ENCODE measurements at regions of chr3 and their contacts with region 1.

Region 1: GRCh38 chr3:185937689-185938463 is at the start of gene TRA2B:
- DNase-seq: peak; percentile 99
- ATAC-seq: peak; percentile 89
- H3K4me3 ChIP-seq: peak within 1 kb of the TSS; percentile 99 to 100 (median 100)
- H3K4me3 Mint-ChIP-seq: peak within 1 kb of the TSS; percentile 99
- H3K27ac ChIP-seq: peak within 1 kb of the TSS; percentile 99 to 100
- H3K27ac Mint-ChIP-seq: peak within 1 kb of the TSS; percentile 100
- H3K4me1 ChIP-seq: peaks cover 26 to 28% of the 10 kb centered on the region in 2 donors
- H3K4me1 Mint-ChIP-seq: peaks cover 39% of the 10 kb centered on the region
- H3K27me3 ChIP-seq: no peaks in the 10 kb centered on the region
- H3K27me3 Mint-ChIP-seq: no peaks in the 10 kb centered on the region
- CTCF ChIP-seq: peak; percentile 51
- total RNA-seq, gene TRA2B: 218 and 220 TPM in 2 replicates

Region 2: GRCh38 chr3:184811999-184812661 is 1125.7 kb before region 1 on chr3 and contains the start of gene VPS8:
- CTCF ChIA-PET with region 1: no interaction called
- POLR2A ChIA-PET with region 1: no interaction called
- intact Hi-C with region 1: loop called (anchors 5 kb)
- DNase-seq: peak; percentile 98
- ATAC-seq: peak; percentile 94
- H3K4me3 ChIP-seq: peak within 1 kb of the TSS; percentile 77 to 95 (median 92)
- H3K4me3 Mint-ChIP-seq: peak within 1 kb of the TSS; percentile 93
- H3K27ac ChIP-seq: peak within 1 kb of the TSS; percentile 70 to 76
- H3K27ac Mint-ChIP-seq: peak within 1 kb of the TSS; percentile 96
- H3K4me1 ChIP-seq: peaks cover 16 to 18% of the 10 kb centered on the region in 2 donors
- H3K4me1 Mint-ChIP-seq: peaks cover 28% of the 10 kb centered on the region
- H3K27me3 ChIP-seq: no peaks in the 10 kb centered on the region
- H3K27me3 Mint-ChIP-seq: peaks cover 3% of the 10 kb centered on the region
- CTCF ChIP-seq: peak; percentile 46
- total RNA-seq, gene VPS8: 95.6 and 106 TPM in 2 replicates

Region 3: DNA sequence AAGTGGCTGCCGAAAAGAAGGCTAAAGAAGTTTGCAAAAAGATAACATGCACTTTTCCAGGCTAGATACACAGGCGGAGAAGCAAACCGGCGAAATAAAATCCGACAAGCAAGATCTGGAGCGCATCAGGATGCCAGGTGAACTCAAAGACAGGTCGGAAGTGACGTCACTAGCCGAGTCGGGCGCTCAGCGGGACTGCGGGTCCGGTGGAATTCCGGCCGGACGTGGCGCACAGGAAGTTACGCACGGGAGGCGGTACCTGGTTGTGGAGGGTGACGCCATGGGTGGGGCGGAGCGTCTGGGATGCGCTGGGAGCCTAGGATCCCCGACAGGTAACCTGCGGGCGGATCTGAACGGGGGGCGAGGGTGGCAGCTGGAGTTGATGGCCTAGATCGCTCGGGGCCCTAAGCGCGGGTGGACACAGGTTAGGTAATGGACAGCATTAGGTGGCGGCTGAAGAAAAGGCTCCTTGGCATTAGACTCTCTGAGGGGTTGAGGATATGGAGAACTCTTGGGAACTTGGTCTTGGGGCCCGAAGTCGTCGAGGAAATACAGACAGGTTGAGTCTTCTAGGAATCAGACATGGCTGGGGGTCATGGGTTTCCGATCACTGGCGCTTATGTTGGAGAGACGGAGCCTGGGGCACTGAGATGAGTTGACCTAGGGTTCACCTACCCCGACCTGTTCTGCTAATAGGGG is 655.0 kb before region 1 on chr3:
- CTCF ChIA-PET with region 1: no interaction called
- POLR2A ChIA-PET with region 1: no interaction called
- intact Hi-C with region 1: loop called (anchors 5 kb)
- DNase-seq: peak; percentile 96
- ATAC-seq: peak; percentile 99
- H3K4me3 ChIP-seq: peak overlapping the region; percentile 68 to 79 (median 77)
- H3K4me3 Mint-ChIP-seq: peak overlapping the region; percentile 90
- H3K27ac ChIP-seq: peak overlapping the region; percentile 54 to 61
- H3K27ac Mint-ChIP-seq: peak overlapping the region; percentile 92
- H3K4me1 ChIP-seq: peaks cover 14 to 15% of the 10 kb centered on the region in 2 donors
- H3K4me1 Mint-ChIP-seq: peaks cover 21% of the 10 kb centered on the region
- H3K27me3 ChIP-seq: peaks cover 0 to 8% (median 4%) of the 10 kb centered on the region in 4 experiments
- H3K27me3 Mint-ChIP-seq: peaks cover 23% of the 10 kb centered on the region
- CTCF ChIP-seq: no peak

Region 4: DNA sequence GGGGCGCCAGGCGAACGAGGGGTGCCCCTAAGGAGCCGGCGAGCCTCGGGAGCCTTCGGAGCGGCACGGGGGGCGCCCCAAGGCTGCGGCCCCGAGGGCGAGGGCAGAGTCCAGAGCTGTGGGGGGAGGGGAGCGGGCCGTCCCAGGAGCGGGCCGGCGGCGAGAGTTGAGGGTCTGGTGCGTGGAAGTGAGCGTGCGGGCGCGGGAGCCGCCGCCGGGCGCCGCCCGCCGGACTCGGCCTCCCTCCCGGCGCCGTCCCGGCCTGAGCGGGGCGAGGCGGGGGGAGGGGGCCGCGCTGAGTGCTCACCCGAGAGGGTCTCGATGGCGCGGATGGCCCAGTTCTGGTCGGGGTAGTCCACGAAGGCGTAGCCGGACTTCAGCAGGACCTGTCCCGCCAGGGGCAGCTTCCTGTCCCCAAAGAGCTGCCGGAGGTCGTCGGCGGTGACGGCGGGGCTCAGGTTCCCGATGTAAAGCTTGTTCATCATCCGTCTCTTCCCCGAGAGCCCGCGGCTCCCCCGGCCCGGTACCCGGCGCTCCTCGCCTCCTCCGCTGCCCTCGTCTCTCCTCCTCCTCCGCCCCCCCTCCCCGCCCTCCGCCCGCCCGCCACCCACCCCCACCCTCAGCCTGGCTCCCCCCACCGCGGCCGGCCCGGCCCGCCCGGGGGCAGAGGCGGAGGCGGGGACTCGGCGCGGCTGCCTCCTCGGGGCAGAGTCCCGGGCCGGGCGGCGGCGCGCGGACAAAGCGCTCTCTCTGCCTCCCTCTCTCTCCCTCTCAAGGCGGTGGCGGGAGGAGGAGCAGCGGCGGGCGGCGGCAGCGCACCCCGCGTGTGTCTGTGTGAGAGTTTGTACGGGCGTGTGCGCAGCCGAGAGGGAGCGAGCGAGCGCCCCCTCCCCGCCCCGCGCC is 113.1 kb before region 1 on chr3 and contains the start of gene IGF2BP2:
- CTCF ChIA-PET with region 1: no interaction called
- POLR2A ChIA-PET with region 1: no interaction called
- intact Hi-C with region 1: loop called (anchors 5 kb)
- DNase-seq: peak; percentile 66
- ATAC-seq: peak; percentile 67
- H3K4me3 ChIP-seq: peak within 1 kb of the TSS in 4 of 5 experiments; percentile 37 to 60 (median 58)
- H3K4me3 Mint-ChIP-seq: peak within 1 kb of the TSS; percentile 90
- H3K27ac ChIP-seq: no peak within 1 kb of the TSS
- H3K27ac Mint-ChIP-seq: peak within 1 kb of the TSS; percentile 46
- H3K4me1 ChIP-seq: peaks cover 15 to 17% of the 10 kb centered on the region in 2 donors
- H3K4me1 Mint-ChIP-seq: peaks cover 18% of the 10 kb centered on the region
- H3K27me3 ChIP-seq: peaks cover 0 to 54% (median 30%) of the 10 kb centered on the region in 4 experiments
- H3K27me3 Mint-ChIP-seq: peaks cover 67% of the 10 kb centered on the region
- CTCF ChIP-seq: no peak
- total RNA-seq, gene IGF2BP2: not detected in 2 replicates

Region 5: GRCh38 chr3:185912929-185913901 is 24.7 kb before region 1 on chr3:
- CTCF ChIA-PET with region 1: no interaction called
- POLR2A ChIA-PET with region 1: interaction called, 3 read pairs
- intact Hi-C with region 1: loop called (anchors 2 kb)
- DNase-seq: peak; percentile 30
- ATAC-seq: no peak
- H3K4me3 ChIP-seq: no peak overlapping the region
- H3K4me3 Mint-ChIP-seq: no peak overlapping the region
- H3K27ac ChIP-seq: no peak overlapping the region
- H3K27ac Mint-ChIP-seq: no peak overlapping the region
- H3K4me1 ChIP-seq: no peaks in the 10 kb centered on the region
- H3K4me1 Mint-ChIP-seq: no peaks in the 10 kb centered on the region
- H3K27me3 ChIP-seq: no peaks in the 10 kb centered on the region
- H3K27me3 Mint-ChIP-seq: no peaks in the 10 kb centered on the region
- CTCF ChIP-seq: no peak

Region 6: GRCh38 chr3:186162221-186162620 is 224.3 kb after region 1 on chr3:
- CTCF ChIA-PET with region 1: no interaction called
- POLR2A ChIA-PET with region 1: no interaction called
- intact Hi-C with region 1: no loop called
- DNase-seq: no peak
- ATAC-seq: no peak
- H3K4me3 ChIP-seq: no peak overlapping the region
- H3K4me3 Mint-ChIP-seq: no peak overlapping the region
- H3K27ac ChIP-seq: no peak overlapping the region
- H3K27ac Mint-ChIP-seq: no peak overlapping the region
- H3K4me1 ChIP-seq: no peaks in the 10 kb centered on the region
- H3K4me1 Mint-ChIP-seq: no peaks in the 10 kb centered on the region
- H3K27me3 ChIP-seq: no peaks in the 10 kb centered on the region
- H3K27me3 Mint-ChIP-seq: no peaks in the 10 kb centered on the region
- CTCF ChIP-seq: no peak

Region 7: GRCh38 chr3:187016639-187017345 is 1078.9 kb after region 1 on chr3:
- CTCF ChIA-PET with region 1: no interaction called
- POLR2A ChIA-PET with region 1: no interaction called
- intact Hi-C with region 1: loop called (anchors 10 kb)
- DNase-seq: peak; percentile 83
- ATAC-seq: peak; percentile 58
- H3K4me3 ChIP-seq: peak overlapping the region in 2 of 5 experiments; percentile 4 to 28
- H3K4me3 Mint-ChIP-seq: peak overlapping the region; percentile 75
- H3K27ac ChIP-seq: peak overlapping the region; percentile 92 to 96
- H3K27ac Mint-ChIP-seq: peak overlapping the region; percentile 90
- H3K4me1 ChIP-seq: peaks cover 97% of the 10 kb centered on the region in 2 donors
- H3K4me1 Mint-ChIP-seq: peaks cover 92% of the 10 kb centered on the region
- H3K27me3 ChIP-seq: no peaks in the 10 kb centered on the region
- H3K27me3 Mint-ChIP-seq: no peaks in the 10 kb centered on the region
- CTCF ChIP-seq: no peak

Measured in B cell (primary cell).